Activated CD8-positive, alpha-beta T cell treated with anti-CD3 and anti-CD28 coated beads for 36 hours (primary cell): ENCODE measurements at regions of chr12 and their contacts with region 1.

Region 1: DNA sequence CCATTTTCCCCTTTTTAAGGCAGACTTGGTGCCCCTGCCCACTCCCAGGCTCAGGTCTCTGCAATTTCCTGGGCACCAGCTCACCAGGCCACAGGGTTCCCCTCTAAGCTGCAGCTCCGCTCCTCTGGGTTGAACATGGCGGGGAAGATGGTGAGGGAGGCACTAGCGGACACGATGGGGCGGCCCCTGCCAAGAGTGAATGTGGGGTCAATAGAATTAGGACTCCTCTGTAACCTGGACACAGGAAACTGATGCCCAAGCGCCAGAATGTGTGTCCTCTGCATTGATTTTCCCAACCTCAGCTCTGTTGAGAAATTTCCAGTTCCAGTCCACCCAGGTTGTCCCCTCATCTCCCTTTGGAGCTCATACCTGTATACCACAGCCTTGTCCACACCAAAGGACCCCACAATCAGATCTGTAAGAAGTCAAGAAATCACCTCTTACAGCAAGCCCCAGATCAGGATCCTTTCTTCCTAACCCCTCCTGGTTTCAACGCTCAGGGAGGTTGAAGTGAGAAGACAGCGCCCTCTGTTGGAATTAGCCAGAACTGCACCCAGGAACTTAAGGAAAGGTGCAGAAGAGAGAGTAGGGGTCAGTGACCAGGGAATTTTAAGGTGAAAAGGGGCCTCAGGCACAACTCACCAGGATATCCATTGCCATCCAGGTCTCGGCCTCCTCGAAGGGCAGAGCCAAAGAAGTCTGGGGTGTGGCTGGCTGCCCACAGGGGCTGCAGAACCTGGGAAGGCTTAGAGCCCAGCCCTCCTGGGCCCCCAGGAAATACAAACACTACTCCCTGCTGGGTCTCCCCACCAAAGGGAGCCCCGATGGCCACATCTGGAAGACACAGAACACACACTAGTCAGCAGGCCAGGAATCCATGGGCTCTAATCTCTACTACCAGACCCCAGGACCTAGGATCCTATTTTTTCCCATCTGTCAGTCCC is 14.7 kb downstream of the ITGA5 start:
- DNase-seq: peak; percentile 82
- ATAC-seq: peak; percentile 69
- H3K4me3 Mint-ChIP-seq: no peak overlapping the region
- H3K27ac Mint-ChIP-seq: peak overlapping the region; percentile 29
- H3K4me1 Mint-ChIP-seq: peaks cover 8% of the 10 kb centered on the region
- H3K27me3 Mint-ChIP-seq: no peaks in the 10 kb centered on the region
- CTCF ChIP-seq: peak; percentile 100

Region 2: DNA sequence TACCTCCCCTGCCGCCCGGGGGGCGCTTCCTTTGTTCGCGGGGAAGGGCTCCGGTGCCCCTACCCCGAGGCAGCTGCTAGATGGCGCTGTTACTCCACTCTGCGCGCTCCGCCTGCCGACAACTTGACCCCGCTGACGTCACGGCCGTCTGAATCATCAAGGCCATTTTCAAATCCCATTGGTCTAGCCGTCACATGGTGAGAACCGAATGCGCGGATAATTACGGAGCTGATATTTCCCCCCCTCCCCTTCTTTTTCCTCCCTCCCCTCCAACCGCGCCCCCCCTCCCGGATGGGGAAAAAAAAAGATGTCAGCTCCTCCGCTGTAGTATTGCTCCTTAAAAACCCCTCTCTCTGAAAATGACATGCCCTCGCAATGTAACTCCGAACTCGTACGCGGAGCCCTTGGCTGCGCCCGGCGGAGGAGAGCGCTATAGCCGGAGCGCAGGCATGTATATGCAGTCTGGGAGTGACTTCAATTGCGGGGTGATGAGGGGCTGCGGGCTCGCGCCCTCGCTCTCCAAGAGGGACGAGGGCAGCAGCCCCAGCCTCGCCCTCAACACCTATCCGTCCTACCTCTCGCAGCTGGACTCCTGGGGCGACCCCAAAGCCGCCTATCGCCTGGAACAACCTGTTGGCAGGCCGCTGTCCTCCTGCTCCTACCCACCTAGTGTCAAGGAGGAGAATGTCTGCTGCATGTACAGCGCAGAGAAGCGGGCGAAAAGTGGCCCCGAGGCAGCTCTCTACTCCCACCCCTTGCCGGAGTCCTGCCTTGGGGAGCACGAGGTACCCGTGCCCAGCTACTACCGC is 419.2 kb before region 1 on chr12 and contains the start of gene HOXC10:
- CTCF ChIA-PET with region 1: no interaction called
- POLR2A ChIA-PET with region 1: no interaction called
- intact Hi-C with region 1: no loop called
- DNase-seq: peak; percentile 97
- ATAC-seq: peak; percentile 83
- H3K4me3 Mint-ChIP-seq: peak within 1 kb of the TSS; percentile 38
- H3K27ac Mint-ChIP-seq: no peak within 1 kb of the TSS
- H3K4me1 Mint-ChIP-seq: peaks cover 27% of the 10 kb centered on the region
- H3K27me3 Mint-ChIP-seq: peaks cover 90% of the 10 kb centered on the region
- CTCF ChIP-seq: peak; percentile 62
- total RNA-seq, gene HOXC10: not detected

Region 3: GRCh38 chr12:54265364-54265812 is 138.9 kb before region 1 on chr12:
- CTCF ChIA-PET with region 1: no interaction called
- POLR2A ChIA-PET with region 1: no interaction called
- intact Hi-C with region 1: no loop called
- DNase-seq: no peak
- ATAC-seq: no peak
- H3K4me3 Mint-ChIP-seq: no peak overlapping the region
- H3K27ac Mint-ChIP-seq: no peak overlapping the region
- H3K4me1 Mint-ChIP-seq: peaks cover 19% of the 10 kb centered on the region
- H3K27me3 Mint-ChIP-seq: no peaks in the 10 kb centered on the region
- CTCF ChIP-seq: no peak

Region 4: GRCh38 chr12:54425702-54426101 is 21.4 kb after region 1 on chr12:
- CTCF ChIA-PET with region 1: interaction called, 330 read pairs
- POLR2A ChIA-PET with region 1: interaction called, 7 read pairs
- intact Hi-C with region 1: no loop called
- DNase-seq: no peak
- ATAC-seq: no peak
- H3K4me3 Mint-ChIP-seq: no peak overlapping the region
- H3K27ac Mint-ChIP-seq: no peak overlapping the region
- H3K4me1 Mint-ChIP-seq: peaks cover 21% of the 10 kb centered on the region
- H3K27me3 Mint-ChIP-seq: peaks cover 2% of the 10 kb centered on the region
- CTCF ChIP-seq: no peak

Region 5: GRCh38 chr12:54431911-54432814 is 27.8 kb after region 1 on chr12:
- CTCF ChIA-PET with region 1: interaction called, 479 read pairs
- POLR2A ChIA-PET with region 1: interaction called, 10 read pairs
- intact Hi-C with region 1: no loop called
- DNase-seq: peak; percentile 80
- ATAC-seq: peak; percentile 72
- H3K4me3 Mint-ChIP-seq: peak overlapping the region; percentile 37
- H3K27ac Mint-ChIP-seq: peak overlapping the region; percentile 60
- H3K4me1 Mint-ChIP-seq: peaks cover 29% of the 10 kb centered on the region
- H3K27me3 Mint-ChIP-seq: no peaks in the 10 kb centered on the region
- CTCF ChIP-seq: no peak

Region 6: DNA sequence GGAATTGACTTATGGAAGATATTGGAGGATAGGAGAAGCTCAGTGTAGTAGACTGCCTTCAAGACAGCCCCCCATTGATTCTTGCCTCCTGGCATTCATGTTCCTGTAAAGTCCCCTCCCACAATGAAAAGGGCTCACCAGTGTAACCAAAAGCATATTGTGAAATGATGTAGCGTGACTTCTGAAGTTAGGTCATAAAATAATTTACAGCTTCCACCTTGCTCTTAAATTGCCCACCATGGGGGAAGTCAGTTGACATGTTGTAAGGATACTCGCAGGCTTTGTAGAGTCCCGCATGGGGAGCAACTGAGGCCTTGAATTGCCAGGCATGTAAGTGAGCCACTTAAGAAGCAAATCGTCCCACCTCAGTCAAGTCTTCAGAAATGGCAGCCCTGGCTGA is 44.0 kb after region 1 on chr12:
- CTCF ChIA-PET with region 1: interaction called, 479 read pairs
- POLR2A ChIA-PET with region 1: interaction called, 4 read pairs
- intact Hi-C with region 1: no loop called
- DNase-seq: no peak
- ATAC-seq: no peak
- H3K4me3 Mint-ChIP-seq: no peak overlapping the region
- H3K27ac Mint-ChIP-seq: no peak overlapping the region
- H3K4me1 Mint-ChIP-seq: no peaks in the 10 kb centered on the region
- H3K27me3 Mint-ChIP-seq: peaks cover 2% of the 10 kb centered on the region
- CTCF ChIP-seq: no peak